ENCODE measurements at regions of chr14 and their contacts with region 1.

Region 1: GRCh38 chr14:60331201-60332045 is 82.4 kb downstream of the PPM1A start:
- DNase-seq: peak; percentile 89
- ATAC-seq: peak; percentile 86
- H3K4me3 Mint-ChIP-seq: peak overlapping the region; percentile 85
- H3K27ac Mint-ChIP-seq: peak overlapping the region; percentile 96
- H3K4me1 Mint-ChIP-seq: peaks cover 39% of the 10 kb centered on the region
- H3K27me3 Mint-ChIP-seq: peaks cover 29% of the 10 kb centered on the region

Region 2: DNA sequence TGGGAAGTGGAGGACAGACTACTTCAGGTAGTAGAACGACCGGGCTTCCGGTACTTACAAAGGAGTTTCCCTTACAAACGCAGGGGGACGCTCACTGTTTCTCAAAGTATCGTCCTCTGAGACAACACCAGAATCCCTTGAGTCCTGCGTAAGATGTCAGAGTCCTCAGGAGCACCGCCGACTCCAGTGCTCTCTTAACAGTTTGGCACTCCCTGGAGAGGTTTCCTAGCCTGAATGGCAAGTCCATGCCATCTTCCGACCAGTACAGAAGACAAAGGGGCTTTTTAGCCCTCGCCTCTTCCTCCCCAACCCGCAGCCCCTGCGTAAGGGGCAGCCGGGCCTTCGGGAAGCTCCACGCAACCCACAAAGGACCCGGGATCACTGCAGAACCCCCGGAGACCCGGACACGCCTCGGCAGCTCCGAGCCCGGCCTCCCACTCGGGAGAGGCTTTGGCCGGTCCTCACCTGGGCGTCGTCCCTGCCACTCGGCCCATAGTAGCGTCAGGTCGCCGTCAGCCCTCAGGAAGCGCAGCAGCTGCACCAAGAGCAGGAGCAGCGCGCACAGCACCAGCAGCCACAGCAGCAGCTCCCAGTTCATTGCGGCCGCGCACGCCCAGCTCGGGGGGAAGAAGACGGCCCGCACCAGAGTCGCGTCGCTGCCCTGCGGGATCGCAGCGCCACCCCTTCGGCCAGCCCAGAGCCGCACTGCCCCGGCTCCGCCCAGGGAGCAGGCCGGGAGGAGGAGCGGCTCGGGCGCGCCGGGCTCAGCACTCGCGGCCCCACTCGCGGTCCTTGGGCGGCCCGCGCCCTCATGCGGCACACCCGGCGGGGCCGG is 166.5 kb before region 1 on chr14 and contains the start of gene DHRS7:
- CTCF ChIA-PET with region 1: interaction called, 11 read pairs
- POLR2A ChIA-PET with region 1: no interaction called
- DNase-seq: peak; percentile 76
- ATAC-seq: peak; percentile 92
- H3K4me3 Mint-ChIP-seq: peak within 1 kb of the TSS; percentile 98
- H3K27ac Mint-ChIP-seq: peak within 1 kb of the TSS; percentile 96
- H3K4me1 Mint-ChIP-seq: peaks cover 42% of the 10 kb centered on the region
- H3K27me3 Mint-ChIP-seq: peaks cover 6% of the 10 kb centered on the region
- total RNA-seq, gene DHRS7: 45.7 to 54.4 TPM

Region 3: GRCh38 chr14:60248697-60249318 is 82.6 kb before region 1 on chr14 and contains the start of gene PPM1A:
- CTCF ChIA-PET with region 1: interaction called, 31 read pairs
- POLR2A ChIA-PET with region 1: interaction called, 6 read pairs
- DNase-seq: peak; percentile 95
- ATAC-seq: peak; percentile 74
- H3K4me3 Mint-ChIP-seq: peak within 1 kb of the TSS; percentile 93
- H3K27ac Mint-ChIP-seq: peak within 1 kb of the TSS; percentile 100
- H3K4me1 Mint-ChIP-seq: peaks cover 56% of the 10 kb centered on the region
- H3K27me3 Mint-ChIP-seq: no peaks in the 10 kb centered on the region
- total RNA-seq, gene PPM1A: 45.2 to 50.1 TPM

Region 4: GRCh38 chr14:60266021-60266937 is 65.1 kb before region 1 on chr14:
- CTCF ChIA-PET with region 1: interaction called, 21 read pairs
- POLR2A ChIA-PET with region 1: no interaction called
- DNase-seq: no peak
- ATAC-seq: no peak
- H3K4me3 Mint-ChIP-seq: no peak overlapping the region
- H3K27ac Mint-ChIP-seq: no peak overlapping the region
- H3K4me1 Mint-ChIP-seq: peaks cover 3% of the 10 kb centered on the region
- H3K27me3 Mint-ChIP-seq: no peaks in the 10 kb centered on the region

Region 5: DNA sequence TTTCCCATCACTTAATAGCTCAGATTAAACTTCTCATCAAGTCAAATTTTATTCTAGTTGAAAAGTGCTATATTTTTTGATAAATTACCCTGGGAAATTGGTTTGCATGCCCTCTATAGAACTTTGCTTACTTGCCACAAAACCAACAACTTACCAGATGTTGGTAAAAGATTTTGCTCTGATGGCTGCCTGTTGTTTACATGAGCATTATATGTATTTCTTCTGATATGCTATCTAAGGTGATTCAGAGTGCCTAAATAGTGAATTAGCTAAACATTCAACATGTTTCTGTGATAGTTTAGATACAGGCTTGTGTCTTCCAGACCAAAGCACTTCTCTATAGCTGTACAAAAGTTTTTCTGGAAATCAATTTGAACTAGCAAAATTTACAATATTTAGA is 31.4 kb before region 1 on chr14:
- CTCF ChIA-PET with region 1: interaction called, 20 read pairs
- POLR2A ChIA-PET with region 1: interaction called, 3 read pairs
- DNase-seq: no peak
- ATAC-seq: no peak
- H3K4me3 Mint-ChIP-seq: no peak overlapping the region
- H3K27ac Mint-ChIP-seq: no peak overlapping the region
- H3K4me1 Mint-ChIP-seq: no peaks in the 10 kb centered on the region
- H3K27me3 Mint-ChIP-seq: no peaks in the 10 kb centered on the region

Region 6: GRCh38 chr14:60317609-60318008 is 13.8 kb before region 1 on chr14:
- CTCF ChIA-PET with region 1: interaction called, 14 read pairs
- POLR2A ChIA-PET with region 1: no interaction called
- DNase-seq: no peak
- ATAC-seq: no peak
- H3K4me3 Mint-ChIP-seq: no peak overlapping the region
- H3K27ac Mint-ChIP-seq: no peak overlapping the region
- H3K4me1 Mint-ChIP-seq: no peaks in the 10 kb centered on the region
- H3K27me3 Mint-ChIP-seq: peaks cover 13% of the 10 kb centered on the region

Region 7: DNA sequence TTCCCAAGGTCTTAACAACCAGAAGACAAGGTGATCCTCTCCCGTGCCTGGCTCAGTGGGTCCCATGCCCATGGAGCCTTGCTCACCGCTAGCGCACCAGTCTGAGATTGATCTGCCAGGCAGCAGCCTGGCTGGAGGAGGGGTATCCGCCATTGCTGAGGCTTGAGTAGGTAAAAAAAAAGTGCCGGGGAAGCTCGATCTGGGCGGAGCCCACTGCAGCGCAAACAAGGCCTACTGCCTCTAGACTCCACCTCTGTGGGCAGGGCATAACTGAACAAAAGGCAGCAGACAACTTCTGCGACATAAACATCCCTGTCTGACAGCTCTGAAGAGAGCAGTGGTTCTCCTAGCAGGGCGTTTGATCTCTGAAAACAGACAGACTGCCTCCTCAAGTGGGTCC is 50.5 kb after region 1 on chr14:
- CTCF ChIA-PET with region 1: no interaction called
- POLR2A ChIA-PET with region 1: no interaction called
- DNase-seq: no peak
- ATAC-seq: no peak
- H3K4me3 Mint-ChIP-seq: no peak overlapping the region
- H3K27ac Mint-ChIP-seq: no peak overlapping the region
- H3K4me1 Mint-ChIP-seq: no peaks in the 10 kb centered on the region
- H3K27me3 Mint-ChIP-seq: peaks cover 3% of the 10 kb centered on the region

Region 8: DNA sequence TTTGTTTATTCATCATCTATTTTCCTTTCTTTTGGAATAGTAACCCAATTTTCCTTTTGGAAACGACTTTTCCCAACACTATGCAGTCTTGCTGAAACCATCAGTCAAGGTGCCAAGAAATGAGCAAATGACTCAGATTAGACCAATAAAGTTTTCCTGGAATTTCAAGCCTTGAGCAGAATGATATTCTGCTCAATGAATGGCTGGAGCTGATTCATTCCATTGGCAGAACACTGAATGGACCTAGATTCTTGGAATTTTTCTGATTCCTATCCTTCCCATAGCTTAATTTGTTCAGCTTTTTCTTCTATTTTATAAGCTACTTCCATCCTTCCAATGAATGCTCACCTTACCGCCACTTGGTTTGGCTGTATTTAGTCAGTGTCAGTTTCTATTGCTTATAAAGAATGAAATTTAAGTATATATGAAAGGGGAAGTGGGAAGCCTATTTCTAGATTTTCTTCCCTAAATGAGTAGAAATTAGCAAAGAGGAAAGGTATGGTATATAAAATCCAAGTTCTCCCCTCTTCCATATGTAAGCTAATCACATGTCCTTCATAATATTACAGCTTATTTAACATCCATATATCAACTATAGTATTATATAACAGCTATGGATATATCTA is 65.4 kb after region 1 on chr14:
- CTCF ChIA-PET with region 1: no interaction called
- POLR2A ChIA-PET with region 1: no interaction called
- DNase-seq: no peak
- ATAC-seq: no peak
- H3K4me3 Mint-ChIP-seq: no peak overlapping the region
- H3K27ac Mint-ChIP-seq: no peak overlapping the region
- H3K4me1 Mint-ChIP-seq: no peaks in the 10 kb centered on the region
- H3K27me3 Mint-ChIP-seq: peaks cover 2% of the 10 kb centered on the region

Region 9: GRCh38 chr14:60561845-60562746 is 230.7 kb after region 1 on chr14:
- CTCF ChIA-PET with region 1: interaction called, 18 read pairs
- POLR2A ChIA-PET with region 1: no interaction called
- DNase-seq: peak; percentile 39
- ATAC-seq: peak; percentile 47
- H3K4me3 Mint-ChIP-seq: no peak overlapping the region
- H3K27ac Mint-ChIP-seq: no peak overlapping the region
- H3K4me1 Mint-ChIP-seq: no peaks in the 10 kb centered on the region
- H3K27me3 Mint-ChIP-seq: peaks cover 11% of the 10 kb centered on the region

Measured in activated CD8-positive, alpha-beta T cell treated with anti-CD3 and anti-CD28 coated beads, Interleukin-2, amount 10 ng/mL, durations not matched to agents 7 days and 5 days (primary cell).